ENCODE measurements at regions of chr18 and their contacts with region 1.

Region 1: DNA sequence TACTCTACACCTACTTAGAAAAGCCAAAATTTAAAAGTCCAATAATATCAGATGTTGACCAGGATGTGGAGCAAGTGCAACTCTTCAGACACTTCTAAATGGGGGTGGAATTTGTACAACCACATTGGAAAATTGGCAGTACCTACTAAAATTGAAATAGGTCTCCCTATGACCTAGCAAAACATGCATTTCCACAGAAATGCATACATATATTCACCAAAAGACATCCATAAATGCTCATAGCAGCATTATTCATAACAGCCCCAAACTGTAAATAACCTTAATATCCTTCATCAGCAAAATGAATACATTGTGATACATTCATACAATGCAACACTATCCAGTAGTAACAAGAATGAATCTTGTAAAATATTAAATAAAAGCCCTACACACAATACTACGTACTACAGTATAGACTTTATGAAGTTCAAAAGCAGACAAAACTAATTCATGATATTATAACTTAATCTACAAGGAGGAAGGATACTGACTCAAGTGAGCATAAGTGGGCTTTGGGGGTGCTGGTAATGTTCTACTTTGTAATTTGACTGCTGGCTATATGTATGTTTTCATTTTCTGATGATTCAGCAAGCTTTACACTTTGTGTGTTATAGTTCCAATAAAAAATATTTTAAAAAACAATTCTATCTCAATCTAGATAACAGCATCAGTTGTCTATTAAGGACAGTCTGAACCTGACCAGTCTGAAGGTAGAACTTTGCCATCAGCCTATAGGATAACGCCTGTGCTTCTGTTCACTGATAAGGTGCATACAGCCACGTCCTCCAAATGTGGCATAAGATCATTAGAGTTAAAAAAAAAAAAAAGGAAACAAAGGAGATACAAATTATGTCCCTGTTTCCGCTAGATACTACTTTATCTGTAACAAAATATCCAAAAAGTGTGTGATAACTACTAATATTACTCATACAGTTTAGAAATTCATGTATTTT is 6.6 kb upstream of the TNFRSF11A start:
- DNase-seq: no peak
- ATAC-seq: no peak
- H3K4me3 Mint-ChIP-seq: no peak overlapping the region
- H3K27ac Mint-ChIP-seq: no peak overlapping the region
- H3K4me1 Mint-ChIP-seq: peaks cover 20% of the 10 kb centered on the region
- H3K27me3 Mint-ChIP-seq: peaks cover 14% of the 10 kb centered on the region
- CTCF ChIP-seq: no peak

Region 2: GRCh38 chr18:62418258-62418657 is 99.8 kb after region 1 on chr18:
- CTCF ChIA-PET with region 1: no interaction called
- POLR2A ChIA-PET with region 1: no interaction called
- DNase-seq: no peak
- ATAC-seq: no peak
- H3K4me3 Mint-ChIP-seq: no peak overlapping the region
- H3K27ac Mint-ChIP-seq: no peak overlapping the region
- H3K4me1 Mint-ChIP-seq: no peaks in the 10 kb centered on the region
- H3K27me3 Mint-ChIP-seq: no peaks in the 10 kb centered on the region
- CTCF ChIP-seq: no peak

Region 3: DNA sequence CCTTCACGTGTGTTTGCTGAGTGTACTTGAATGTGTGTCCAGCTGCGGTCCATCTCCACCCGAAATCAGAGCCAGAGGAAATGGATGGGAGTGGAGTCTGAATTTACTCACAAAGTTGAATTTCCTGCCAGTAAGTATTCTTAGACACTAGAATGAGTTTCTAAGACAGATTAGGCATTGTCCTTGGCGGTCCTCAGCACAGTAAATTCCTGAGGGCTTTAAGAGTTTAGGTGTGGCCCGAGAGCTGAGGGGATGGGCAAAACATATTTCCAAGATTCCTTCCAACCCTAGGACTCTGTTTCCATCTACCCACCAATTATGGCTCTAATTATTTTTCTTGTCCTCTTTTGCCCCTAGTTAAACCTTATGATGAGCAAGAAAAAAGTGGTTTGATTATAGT is 306.5 kb after region 1 on chr18:
- CTCF ChIA-PET with region 1: no interaction called
- POLR2A ChIA-PET with region 1: interaction called, 12 read pairs
- DNase-seq: no peak
- ATAC-seq: no peak
- H3K4me3 Mint-ChIP-seq: no peak overlapping the region
- H3K27ac Mint-ChIP-seq: no peak overlapping the region
- H3K4me1 Mint-ChIP-seq: no peaks in the 10 kb centered on the region
- H3K27me3 Mint-ChIP-seq: no peaks in the 10 kb centered on the region
- CTCF ChIP-seq: no peak

Measured in WTC11 (cell line).